ENCODE measurements at regions of chr1 and their contacts with region 1.

Region 1: GRCh38 chr1:61157468-61157987 is 75.2 kb downstream of the NFIA start:
- DNase-seq: no peak
- ATAC-seq: no peak
- H3K4me3 ChIP-seq: no peak overlapping the region
- H3K27ac ChIP-seq: peak overlapping the region; percentile 17; the same call in 1 of the 3 replicates
- H3K4me1 ChIP-seq: peaks cover 6 to 35% of the 10 kb centered on the region in 2 experiments
- H3K27me3 ChIP-seq: no peaks in the 10 kb centered on the region
- CTCF ChIP-seq: no peak
- EP300 ChIP-seq: no peak
- POLR2A ChIP-seq: no peak
- RAD21 ChIP-seq: no peak

Region 2: DNA sequence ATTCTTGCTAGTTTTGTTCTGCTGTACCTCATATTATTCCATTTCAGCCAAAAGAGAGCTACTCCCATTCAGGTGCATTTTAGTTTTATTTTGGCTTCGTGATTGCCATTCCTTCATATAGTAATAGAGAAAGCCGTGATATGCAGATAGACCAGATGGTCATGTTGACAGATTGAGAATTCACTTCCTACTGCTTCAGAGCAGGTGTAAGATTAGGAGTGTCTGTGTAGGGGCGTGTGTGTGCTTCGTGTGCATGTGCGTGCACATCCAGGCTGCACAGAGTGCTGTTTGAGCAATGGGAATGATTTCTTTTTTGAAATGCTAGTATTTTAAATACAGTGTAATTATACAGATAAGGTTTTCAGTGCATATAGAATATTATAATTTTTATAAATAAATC is 64.9 kb before region 1 on chr1:
- CTCF ChIA-PET with region 1: no interaction called
- POLR2A ChIA-PET with region 1: no interaction called
- in situ Hi-C with region 1: no loop called
- intact Hi-C with region 1: no loop called
- DNase-seq: no peak
- ATAC-seq: peak; percentile 38; the same call in 2 of the 3 replicates
- H3K4me3 ChIP-seq: no peak overlapping the region
- H3K27ac ChIP-seq: no peak overlapping the region
- H3K4me1 ChIP-seq: peaks cover 0 to 2% of the 10 kb centered on the region in 2 experiments; a peak in 2 of 5 replicates
- H3K27me3 ChIP-seq: no peaks in the 10 kb centered on the region
- CTCF ChIP-seq: no peak
- EP300 ChIP-seq: no peak
- POLR2A ChIP-seq: no peak
- RAD21 ChIP-seq: no peak

Region 3: GRCh38 chr1:61109158-61109557 is 48.4 kb before region 1 on chr1:
- CTCF ChIA-PET with region 1: no interaction called
- POLR2A ChIA-PET with region 1: no interaction called
- in situ Hi-C with region 1: no loop called
- intact Hi-C with region 1: no loop called
- DNase-seq: no peak
- ATAC-seq: no peak
- H3K4me3 ChIP-seq: no peak overlapping the region
- H3K27ac ChIP-seq: peak overlapping the region; percentile 18; the same call in 1 of the 3 replicates
- H3K4me1 ChIP-seq: peaks cover 0 to 4% of the 10 kb centered on the region in 2 experiments; a peak in 4 of 5 replicates
- H3K27me3 ChIP-seq: no peaks in the 10 kb centered on the region
- CTCF ChIP-seq: no peak
- EP300 ChIP-seq: no peak
- POLR2A ChIP-seq: no peak
- RAD21 ChIP-seq: no peak

Region 4: GRCh38 chr1:61141288-61142042 is 16.1 kb before region 1 on chr1:
- CTCF ChIA-PET with region 1: no interaction called
- POLR2A ChIA-PET with region 1: interaction called, 12 read pairs
- in situ Hi-C with region 1: no loop called
- intact Hi-C with region 1: no loop called
- DNase-seq: peak in 2 of 4 experiments; percentile 25 to 47
- ATAC-seq: peak; percentile 56
- H3K4me3 ChIP-seq: no peak overlapping the region
- H3K27ac ChIP-seq: peak overlapping the region; percentile 51
- H3K4me1 ChIP-seq: peaks cover 8 to 33% of the 10 kb centered on the region in 2 experiments
- H3K27me3 ChIP-seq: no peaks in the 10 kb centered on the region
- CTCF ChIP-seq: no peak
- EP300 ChIP-seq: peak; percentile 94
- POLR2A ChIP-seq: no peak
- RAD21 ChIP-seq: 0 out of 4 replicates have a peak, but pooled peaks of 1 of the 2 experiments have one; percentile 6

Region 5: DNA sequence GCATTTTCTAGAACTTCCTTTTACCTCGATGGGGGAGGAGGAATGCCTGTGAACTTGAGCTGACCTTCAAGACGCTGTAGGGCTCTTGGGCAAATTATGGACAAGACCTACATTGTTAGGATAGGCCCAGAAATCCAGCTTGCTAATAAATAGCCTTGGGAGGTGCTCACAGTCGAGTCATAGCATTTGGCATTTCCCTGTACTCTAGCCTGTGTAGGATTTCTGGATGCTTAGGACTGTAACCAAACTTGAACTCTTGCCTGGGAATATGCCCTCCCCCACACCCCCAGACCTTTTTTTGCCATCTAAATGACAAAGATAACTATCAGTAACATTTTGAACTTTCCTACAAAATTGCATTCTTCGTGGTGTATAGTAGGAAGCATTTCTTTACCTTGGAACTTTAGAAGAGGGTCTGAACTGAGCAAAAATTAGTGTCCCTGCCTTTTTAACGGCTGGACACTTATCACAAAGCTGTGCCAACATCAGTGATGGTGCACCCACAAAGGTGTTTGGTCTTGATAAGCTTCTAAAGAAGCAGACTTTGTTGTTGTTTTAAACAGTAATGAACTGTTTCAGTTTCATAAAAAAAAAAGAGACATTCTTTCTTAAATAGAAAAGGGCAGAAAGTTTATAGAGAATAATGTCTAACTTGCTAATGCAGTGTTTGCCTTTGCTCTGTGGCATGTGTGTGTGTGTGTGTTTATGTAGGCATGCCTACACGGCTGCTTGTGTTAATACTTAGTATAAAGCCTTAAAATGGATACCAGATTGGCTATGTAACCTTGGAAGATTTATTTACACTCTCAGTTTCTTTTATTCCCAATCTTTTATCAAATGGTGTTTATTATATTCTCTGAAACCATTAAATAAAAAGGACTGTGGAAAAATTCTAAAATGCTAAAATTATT is 13.1 kb after region 1 on chr1:
- CTCF ChIA-PET with region 1: no interaction called
- POLR2A ChIA-PET with region 1: interaction called, 25 read pairs
- in situ Hi-C with region 1: no loop called
- intact Hi-C with region 1: no loop called
- DNase-seq: peak; percentile 66 to 80 (median 78)
- ATAC-seq: peak; percentile 63
- H3K4me3 ChIP-seq: no peak overlapping the region
- H3K27ac ChIP-seq: peak overlapping the region; percentile 86
- H3K4me1 ChIP-seq: peaks cover 4 to 70% of the 10 kb centered on the region in 2 experiments
- H3K27me3 ChIP-seq: no peaks in the 10 kb centered on the region
- CTCF ChIP-seq: no peak
- EP300 ChIP-seq: peak; percentile 95
- POLR2A ChIP-seq: no peak
- RAD21 ChIP-seq: no peak

Measured in K562 (cell line).